H1 (cell line): ENCODE measurements at regions of chr1 and their contacts with region 1.

Region 1: GRCh38 chr1:155989242-155990004 is 11.1 kb upstream of the ARHGEF2 start:
- DNase-seq: peak in 1 of 2 experiments; percentile 91
- H3K4me3 ChIP-seq: no peak overlapping the region; a peak in 1 of 8 replicates
- H3K27ac ChIP-seq: no peak overlapping the region; the same call in 1 of the 2 replicates
- H3K4me1 ChIP-seq: peaks cover 0 to 10% (median 5%) of the 10 kb centered on the region in 4 experiments; a peak in 5 of 7 replicates
- H3K27me3 ChIP-seq: no peaks in the 10 kb centered on the region
- CTCF ChIP-seq: peak; percentile 94 to 98 (median 98)
- EP300 ChIP-seq: no peak
- POLR2A ChIP-seq: no peak
- RAD21 ChIP-seq: peak; percentile 97 to 98

Region 2: GRCh38 chr1:155934097-155934935 is 55.1 kb before region 1 on chr1 and contains the start of gene KHDC4:
- CTCF ChIA-PET with region 1: interaction called, 49 read pairs
- POLR2A ChIA-PET with region 1: interaction called, 11 read pairs
- DNase-seq: peak; percentile 87 to 96
- H3K4me3 ChIP-seq: peak within 1 kb of the TSS; percentile 89 to 100 (median 94)
- H3K27ac ChIP-seq: peak within 1 kb of the TSS; percentile 88
- H3K4me1 ChIP-seq: peaks cover 0 to 2% (median 1%) of the 10 kb centered on the region in 4 experiments; a peak in 4 of 7 replicates
- H3K27me3 ChIP-seq: no peaks in the 10 kb centered on the region
- CTCF ChIP-seq: no peak
- EP300 ChIP-seq: no peak
- POLR2A ChIP-seq: peak; percentile 91 to 96
- RAD21 ChIP-seq: peak in 1 of 2 experiments; percentile 10; a peak in 2 of 4 replicates
- total RNA-seq, gene KHDC4: 53.4 and 56.6 TPM in 2 replicates

Region 3: GRCh38 chr1:155946633-155947219 is 42.7 kb before region 1 on chr1:
- CTCF ChIA-PET with region 1: interaction called, 41 read pairs
- POLR2A ChIA-PET with region 1: interaction called, 26 read pairs
- DNase-seq: no peak
- H3K4me3 ChIP-seq: no peak overlapping the region
- H3K27ac ChIP-seq: no peak overlapping the region
- H3K4me1 ChIP-seq: peaks cover 0 to 8% (median 4%) of the 10 kb centered on the region in 4 experiments; a peak in 4 of 7 replicates
- H3K27me3 ChIP-seq: no peaks in the 10 kb centered on the region
- CTCF ChIP-seq: no peak
- EP300 ChIP-seq: no peak
- POLR2A ChIP-seq: no peak
- RAD21 ChIP-seq: no peak

Region 4: DNA sequence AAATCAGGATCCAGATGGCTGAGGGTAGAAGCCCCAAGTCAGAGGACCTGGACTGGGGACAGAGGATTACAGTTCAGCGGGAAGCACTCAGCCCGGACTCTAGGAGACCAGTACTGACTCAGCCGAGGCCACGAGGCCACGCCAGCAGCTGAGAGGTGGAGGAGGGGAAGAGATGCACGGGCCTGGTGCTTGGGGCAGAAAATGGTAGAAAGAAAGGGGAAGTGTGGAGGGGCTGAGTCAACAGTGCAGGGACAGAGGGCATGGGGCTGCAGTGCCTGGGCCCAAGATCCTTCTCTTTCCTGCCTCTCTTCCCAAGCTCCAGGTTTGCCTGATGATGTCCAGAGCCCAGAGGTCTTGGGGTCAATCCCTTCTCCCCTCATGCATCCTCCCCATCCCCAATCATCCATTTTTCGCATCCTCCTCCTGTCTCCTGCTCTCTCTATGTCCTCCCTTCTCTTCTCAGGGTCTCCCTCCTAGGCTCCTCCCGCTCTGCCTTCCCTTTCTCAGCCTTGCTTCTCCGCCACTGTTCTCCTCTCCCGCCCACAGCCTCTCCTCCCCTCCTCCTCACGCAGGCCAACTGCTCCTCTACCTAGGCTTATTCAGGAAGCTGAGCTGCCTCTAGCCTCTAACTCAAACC is 18.8 kb before region 1 on chr1:
- CTCF ChIA-PET with region 1: interaction called, 126 read pairs
- POLR2A ChIA-PET with region 1: interaction called, 282 read pairs
- DNase-seq: no peak
- H3K4me3 ChIP-seq: no peak overlapping the region
- H3K27ac ChIP-seq: no peak overlapping the region
- H3K4me1 ChIP-seq: peaks cover 9 to 43% (median 30%) of the 10 kb centered on the region in 4 experiments
- H3K27me3 ChIP-seq: no peaks in the 10 kb centered on the region
- CTCF ChIP-seq: no peak
- EP300 ChIP-seq: no peak
- POLR2A ChIP-seq: no peak
- RAD21 ChIP-seq: no peak

Region 5: GRCh38 chr1:156001682-156002171 is 12.3 kb after region 1 on chr1:
- CTCF ChIA-PET with region 1: interaction called, 27 read pairs
- POLR2A ChIA-PET with region 1: interaction called, 17 read pairs
- DNase-seq: no peak
- H3K4me3 ChIP-seq: no peak overlapping the region
- H3K27ac ChIP-seq: no peak overlapping the region
- H3K4me1 ChIP-seq: peaks cover 0 to 4% (median under 1%) of the 10 kb centered on the region in 4 experiments; a peak in 3 of 7 replicates
- H3K27me3 ChIP-seq: no peaks in the 10 kb centered on the region
- CTCF ChIP-seq: no peak
- EP300 ChIP-seq: no peak
- POLR2A ChIP-seq: no peak
- RAD21 ChIP-seq: no peak

Region 6: DNA sequence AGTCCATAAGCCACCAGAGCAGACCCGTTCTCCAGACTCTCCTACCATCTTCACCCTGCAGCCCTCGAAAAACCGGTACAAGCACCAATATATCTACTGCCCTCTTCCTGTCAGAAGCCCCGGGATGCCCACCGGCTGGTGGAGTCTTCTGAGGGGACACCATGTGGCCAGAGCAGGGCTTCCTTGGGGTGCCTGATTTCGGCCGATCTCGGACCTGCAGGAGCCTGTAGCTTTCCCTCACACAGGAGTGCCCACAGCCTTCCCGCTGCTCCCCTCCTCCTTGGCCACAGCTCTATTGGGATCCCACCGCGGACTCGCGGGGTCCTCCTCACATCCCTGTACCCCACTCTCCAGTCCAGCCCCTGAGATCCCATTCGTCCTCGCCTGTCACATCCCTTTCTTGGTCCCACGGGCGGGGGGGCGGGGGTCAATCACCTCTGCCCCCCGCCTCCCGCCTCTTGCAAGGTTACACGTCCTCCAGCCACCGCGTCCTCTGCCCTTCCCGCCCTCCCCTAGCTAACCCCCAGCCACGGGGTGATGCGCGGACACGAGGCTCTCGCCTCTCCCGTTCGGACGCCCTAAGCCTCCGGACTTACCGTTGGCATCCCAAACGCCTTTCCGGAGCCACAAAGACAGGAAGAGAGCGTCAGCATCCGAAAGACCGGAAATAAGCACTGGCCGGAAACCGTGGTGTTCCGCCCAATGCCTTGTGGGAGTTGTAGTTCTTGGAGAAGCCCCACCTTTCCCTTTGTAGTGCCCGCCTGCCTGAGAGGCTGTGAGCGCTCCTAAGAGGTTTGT is 31.1 kb after region 1 on chr1 and contains the start of gene SSR2:
- CTCF ChIA-PET with region 1: interaction called, 12 read pairs
- POLR2A ChIA-PET with region 1: no interaction called
- DNase-seq: peak; percentile 73 to 84
- H3K4me3 ChIP-seq: peak within 1 kb of the TSS; percentile 92 to 97 (median 94)
- H3K27ac ChIP-seq: no peak within 1 kb of the TSS
- H3K4me1 ChIP-seq: peaks cover 0 to 3% (median under 1%) of the 10 kb centered on the region in 4 experiments; a peak in 3 of 7 replicates
- H3K27me3 ChIP-seq: peaks cover 0 to 4% (median under 1%) of the 10 kb centered on the region in 4 experiments; a peak in 1 of 7 replicates
- CTCF ChIP-seq: no peak
- EP300 ChIP-seq: no peak
- POLR2A ChIP-seq: peak in 1 of 2 experiments; percentile 74; a peak in 2 of 3 replicates
- RAD21 ChIP-seq: no peak
- total RNA-seq, gene SSR2: 190 and 196 TPM in 2 replicates

Region 7: GRCh38 chr1:156193488-156194299 is 204.3 kb after region 1 on chr1 and contains the start of gene SLC25A44:
- CTCF ChIA-PET with region 1: no interaction called
- POLR2A ChIA-PET with region 1: no interaction called
- DNase-seq: peak; percentile 96 to 99
- H3K4me3 ChIP-seq: peak within 1 kb of the TSS; percentile 78 to 97 (median 94)
- H3K27ac ChIP-seq: peak within 1 kb of the TSS; percentile 73; the same call in 1 of the 2 replicates
- H3K4me1 ChIP-seq: peaks cover 2 to 16% (median 4%) of the 10 kb centered on the region in 4 experiments; a peak in 5 of 7 replicates
- H3K27me3 ChIP-seq: no peaks in the 10 kb centered on the region
- CTCF ChIP-seq: peak; percentile 25 to 52 (median 51)
- EP300 ChIP-seq: 0 out of 3 replicates have a peak, but pooled peaks of 1 of the 2 experiments have one; percentile 26
- POLR2A ChIP-seq: peak; percentile 59 to 66; a peak in 2 of 3 replicates
- RAD21 ChIP-seq: peak in 1 of 2 experiments; percentile 20; a peak in 1 of 4 replicates
- total RNA-seq, gene SLC25A44: 23.4 and 31.4 TPM in 2 replicates